Endothelial cell of umbilical vein (primary cell): ENCODE measurements at regions of chr17 and their contacts with region 1.

Region 1: DNA sequence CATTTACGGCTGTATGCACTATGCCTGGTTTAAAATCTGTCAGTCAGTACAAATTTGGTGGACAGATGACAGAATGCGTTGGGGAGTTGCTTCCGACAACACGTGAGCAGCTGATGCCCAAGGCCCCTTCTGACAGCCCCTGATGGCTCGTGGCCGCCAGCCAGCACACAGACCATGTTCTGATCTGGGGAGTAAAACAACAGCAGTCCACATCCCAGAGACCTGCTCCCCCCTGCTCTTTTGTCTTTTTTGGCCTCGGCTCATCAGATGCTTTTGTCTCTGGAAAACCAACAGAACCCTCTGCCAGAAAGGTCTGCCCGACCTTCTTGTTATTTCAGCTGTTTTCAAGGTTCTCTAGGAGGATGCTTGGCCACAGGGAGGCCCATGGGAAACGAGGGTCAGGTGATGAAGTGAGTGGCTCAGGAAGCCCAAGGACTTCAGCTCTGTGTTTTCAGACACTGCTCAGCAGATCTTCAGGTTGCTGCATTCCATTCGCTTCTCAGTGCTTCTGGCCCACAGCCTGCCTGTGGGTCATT is 10.8 kb downstream of the ARSG start:
- DNase-seq: peak; percentile 97
- H3K4me3 ChIP-seq: no peak overlapping the region
- H3K27ac ChIP-seq: peak overlapping the region; percentile 77
- H3K4me1 ChIP-seq: peaks cover 36% of the 10 kb centered on the region
- H3K27me3 ChIP-seq: no peaks in the 10 kb centered on the region
- CTCF ChIP-seq: peak in 1 of 2 donors; percentile 1
- POLR2A ChIP-seq: no peak

Region 2: DNA sequence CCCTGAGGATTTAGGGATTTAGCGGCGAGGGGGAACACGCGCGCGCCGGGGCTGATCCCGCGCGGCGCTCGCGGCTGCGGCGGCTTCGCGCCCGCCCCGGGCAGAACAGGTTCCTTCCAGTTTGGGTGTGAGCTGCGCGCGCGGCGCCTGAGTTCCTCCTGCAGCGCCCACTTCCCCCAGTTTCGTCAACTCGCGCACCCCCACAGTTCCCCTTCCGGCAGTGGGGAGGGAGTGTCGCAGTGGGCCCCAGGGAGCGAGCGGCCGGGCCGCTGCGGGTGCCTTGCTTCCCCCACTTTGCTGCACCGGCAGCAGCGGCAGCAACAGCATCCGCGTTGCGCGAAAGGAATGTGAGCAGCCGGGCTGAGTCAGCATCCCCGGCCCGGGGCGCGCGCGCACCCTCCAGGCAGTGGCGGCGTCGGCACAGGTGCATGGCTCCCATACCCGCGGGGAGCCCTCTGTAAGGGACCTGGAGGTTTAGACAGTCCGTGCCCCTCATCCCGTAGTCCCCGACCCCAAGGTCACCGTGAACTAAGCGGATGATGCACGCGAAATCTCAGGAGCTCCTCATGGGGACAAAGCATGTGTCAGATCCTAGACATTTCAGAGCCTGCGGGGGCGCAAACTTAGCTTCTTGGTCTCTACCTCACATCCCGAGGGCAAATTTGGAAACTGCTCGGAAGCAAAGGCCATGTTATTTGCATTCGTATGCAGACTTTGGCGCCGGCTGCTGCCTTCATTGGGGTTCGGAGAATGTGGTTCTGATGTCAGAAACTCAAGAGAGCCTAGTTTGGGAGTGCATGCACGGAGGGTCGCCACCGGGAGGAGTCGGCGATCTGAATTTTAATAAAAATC is 10.1 kb before region 1 on chr17:
- CTCF ChIA-PET with region 1: interaction called, 15 read pairs
- POLR2A ChIA-PET with region 1: interaction called, 3 read pairs
- dilution Hi-C with region 1: no loop called
- intact Hi-C with region 1: loop called (anchors 1 kb)
- DNase-seq: peak; percentile 74
- H3K4me3 ChIP-seq: peak overlapping the region; percentile 53 to 74 (median 66)
- H3K27ac ChIP-seq: peak overlapping the region; percentile 48
- H3K4me1 ChIP-seq: peaks cover 15% of the 10 kb centered on the region
- H3K27me3 ChIP-seq: no peaks in the 10 kb centered on the region
- CTCF ChIP-seq: peak; percentile 16 to 31
- POLR2A ChIP-seq: peak; percentile 57

Region 3: GRCh38 chr17:68356520-68356919 is 54.4 kb after region 1 on chr17:
- CTCF ChIA-PET with region 1: interaction called, 3 read pairs
- POLR2A ChIA-PET with region 1: interaction called, 3 read pairs
- dilution Hi-C with region 1: no loop called
- intact Hi-C with region 1: loop called (anchors 2 kb)
- DNase-seq: no peak
- H3K4me3 ChIP-seq: no peak overlapping the region
- H3K27ac ChIP-seq: no peak overlapping the region
- H3K4me1 ChIP-seq: peaks cover 14% of the 10 kb centered on the region
- H3K27me3 ChIP-seq: no peaks in the 10 kb centered on the region
- CTCF ChIP-seq: no peak
- POLR2A ChIP-seq: no peak

Region 4: DNA sequence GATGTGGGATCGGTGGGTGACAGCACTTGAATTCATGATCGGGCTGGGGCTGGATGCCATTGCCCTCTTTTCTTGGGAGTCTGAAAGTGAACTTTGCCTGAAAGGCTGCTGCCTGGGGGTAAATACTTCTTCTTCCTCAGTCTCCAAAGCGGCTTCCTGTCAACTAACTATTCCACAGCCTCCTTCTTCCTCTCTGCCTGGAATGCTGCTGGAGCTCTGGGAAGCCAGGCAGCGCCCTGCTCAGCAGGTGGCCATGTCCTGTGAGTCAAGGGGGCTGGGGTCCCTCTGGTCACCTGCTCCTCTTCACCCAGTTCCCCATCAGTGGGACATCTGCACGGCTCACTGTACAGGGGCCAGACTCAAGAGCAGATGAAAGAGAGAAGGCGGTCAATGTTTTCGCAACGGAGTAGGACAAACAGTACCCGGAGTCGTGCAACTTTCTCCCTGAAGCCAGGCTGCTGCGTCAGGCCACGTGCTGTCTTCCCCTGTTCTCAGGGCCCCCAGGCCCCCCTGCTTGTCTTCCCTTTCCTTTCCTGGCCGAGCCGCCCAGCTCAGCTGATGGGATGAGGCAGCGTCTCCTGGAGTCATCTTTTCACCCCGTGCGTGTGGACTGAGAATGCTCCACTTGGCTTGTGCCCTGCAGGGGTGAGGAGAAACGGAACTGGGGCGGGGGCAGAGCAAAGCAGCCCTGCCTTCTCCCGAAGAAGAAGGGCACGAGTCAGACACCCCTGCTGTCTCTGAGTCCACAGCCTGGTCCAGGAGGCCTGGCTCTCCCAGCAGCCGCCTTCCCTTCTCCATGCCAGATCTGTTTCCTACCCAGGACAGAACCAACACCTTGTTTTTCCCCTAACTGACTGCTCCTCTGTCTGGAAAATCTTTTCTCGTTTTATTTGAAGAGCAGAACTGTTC is 76.0 kb after region 1 on chr17:
- CTCF ChIA-PET with region 1: interaction called, 4 read pairs
- POLR2A ChIA-PET with region 1: interaction called, 5 read pairs
- dilution Hi-C with region 1: no loop called
- intact Hi-C with region 1: loop called (anchors 1 kb)
- DNase-seq: peak; percentile 92
- H3K4me3 ChIP-seq: no peak overlapping the region
- H3K27ac ChIP-seq: peak overlapping the region; percentile 75
- H3K4me1 ChIP-seq: peaks cover 32% of the 10 kb centered on the region
- H3K27me3 ChIP-seq: no peaks in the 10 kb centered on the region
- CTCF ChIP-seq: no peak
- POLR2A ChIP-seq: peak; percentile 53

Region 5: DNA sequence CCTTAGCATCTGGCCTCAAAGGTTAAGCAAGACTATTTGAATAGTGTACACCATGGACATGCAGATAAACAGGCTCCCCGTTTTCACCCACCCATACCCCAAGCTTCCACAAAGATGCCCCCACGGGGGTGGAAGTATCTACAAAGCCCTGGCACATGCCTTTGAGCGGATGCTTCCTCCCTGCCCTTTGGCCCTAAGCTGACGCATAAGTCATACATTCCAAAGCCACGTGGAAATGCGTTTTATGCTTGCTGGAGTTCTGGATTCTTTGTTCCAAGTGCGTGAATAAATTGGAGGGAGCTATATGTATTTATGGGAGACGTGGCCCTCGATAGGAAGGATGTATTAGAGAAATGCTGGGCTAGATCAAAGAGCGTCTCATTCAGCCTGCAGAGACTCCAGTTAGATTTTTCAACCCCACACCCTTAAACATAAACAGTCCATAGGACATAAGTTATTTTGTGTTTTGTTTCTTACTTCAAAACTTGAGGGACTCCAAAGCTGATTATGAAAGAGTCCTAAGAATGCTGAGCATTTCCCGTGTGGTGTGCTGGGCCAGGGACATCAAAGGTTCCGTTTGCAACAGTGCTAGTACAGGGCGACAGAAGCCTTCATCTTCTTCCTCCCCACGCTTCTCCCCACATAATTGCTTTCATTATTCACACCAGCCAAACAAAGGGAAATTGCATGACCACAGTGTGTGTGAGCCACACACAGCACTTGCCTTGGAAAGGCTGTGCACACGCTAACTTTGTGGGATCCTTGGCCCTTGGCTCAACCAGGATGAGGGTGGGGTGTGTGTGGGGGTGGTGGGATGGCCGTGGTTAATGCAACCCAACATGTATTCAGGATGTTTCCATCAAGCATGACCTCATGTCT is 81.5 kb after region 1 on chr17:
- CTCF ChIA-PET with region 1: interaction called, 4 read pairs
- POLR2A ChIA-PET with region 1: interaction called, 5 read pairs
- dilution Hi-C with region 1: no loop called
- intact Hi-C with region 1: loop called (anchors 1 kb)
- DNase-seq: peak; percentile 82
- H3K4me3 ChIP-seq: no peak overlapping the region
- H3K27ac ChIP-seq: peak overlapping the region; percentile 76
- H3K4me1 ChIP-seq: peaks cover 37% of the 10 kb centered on the region
- H3K27me3 ChIP-seq: no peaks in the 10 kb centered on the region
- CTCF ChIP-seq: no peak
- POLR2A ChIP-seq: peak; percentile 20